T47D (cell line): ENCODE measurements at regions of chr20 and their contacts with region 1.

Region 1: DNA sequence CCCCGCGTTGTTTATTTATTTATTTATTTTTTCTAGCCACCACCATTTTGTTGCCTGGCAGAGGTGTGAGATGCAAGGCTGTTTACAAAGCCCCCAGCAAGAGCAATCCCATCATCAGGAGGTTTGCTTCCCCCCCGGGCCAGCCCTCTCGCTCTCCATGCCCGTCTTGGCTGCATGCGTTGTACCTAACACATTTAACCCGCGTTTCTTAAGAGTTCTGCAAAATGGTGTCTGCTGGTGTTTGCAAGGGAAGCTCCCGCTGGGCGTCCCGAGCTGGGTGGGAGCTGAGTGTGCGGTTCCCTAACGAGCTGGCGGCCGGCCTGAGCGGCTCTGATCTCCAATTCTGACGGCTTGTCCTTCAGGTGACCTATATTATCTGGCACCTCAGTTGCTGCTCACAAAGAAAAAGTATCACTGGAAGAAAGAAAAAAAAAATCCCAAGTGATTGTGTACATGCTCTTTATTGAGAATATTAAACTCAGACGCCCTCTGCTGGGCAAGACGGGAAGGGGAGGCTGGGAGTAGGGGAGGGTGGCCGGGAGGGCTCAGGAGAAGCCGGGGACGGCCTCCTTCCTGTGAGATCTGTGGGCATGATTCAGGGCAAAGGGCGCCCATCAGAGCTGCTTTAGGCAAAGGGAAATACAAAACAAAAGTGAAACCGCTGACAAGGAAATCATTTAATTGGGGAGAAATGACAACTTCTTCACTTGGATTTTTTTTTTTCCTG is 154.8 kb downstream of the BCAS1 start:
- DNase-seq: peak; percentile 85 to 93

Region 2: GRCh38 chr20:53750827-53751619 is 164.6 kb before region 1 on chr20:
- in situ Hi-C with region 1: loop called (anchors 25 kb)
- DNase-seq: peak in 1 of 2 experiments; percentile 65

Region 3: DNA sequence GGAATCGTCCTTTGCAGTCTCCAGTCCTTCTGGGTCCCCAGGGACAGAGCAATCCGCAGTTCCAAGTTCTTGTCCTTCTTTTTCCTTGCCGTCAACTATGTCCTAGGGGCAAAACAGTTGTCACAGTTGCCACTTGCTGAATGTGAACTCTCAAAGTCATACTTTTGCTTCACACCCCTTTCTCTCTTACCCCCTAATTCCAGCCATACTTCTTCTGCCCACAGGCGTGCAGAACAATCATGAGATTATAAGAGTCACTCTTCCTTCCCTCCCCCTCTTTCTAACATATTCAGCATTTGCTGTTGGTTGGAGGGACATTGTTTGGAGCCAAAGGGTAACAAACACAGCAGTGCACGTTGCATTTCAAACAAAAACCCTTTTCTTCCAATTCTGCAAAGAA is 80.3 kb after region 1 on chr20:
- in situ Hi-C with region 1: no loop called
- DNase-seq: no peak

Region 4: GRCh38 chr20:54067606-54068174 is 152.1 kb after region 1 on chr20:
- in situ Hi-C with region 1: no loop called
- DNase-seq: peak; percentile 70 to 95